ENCODE measurements at regions of chr13 and their contacts with region 1.

Region 1: DNA sequence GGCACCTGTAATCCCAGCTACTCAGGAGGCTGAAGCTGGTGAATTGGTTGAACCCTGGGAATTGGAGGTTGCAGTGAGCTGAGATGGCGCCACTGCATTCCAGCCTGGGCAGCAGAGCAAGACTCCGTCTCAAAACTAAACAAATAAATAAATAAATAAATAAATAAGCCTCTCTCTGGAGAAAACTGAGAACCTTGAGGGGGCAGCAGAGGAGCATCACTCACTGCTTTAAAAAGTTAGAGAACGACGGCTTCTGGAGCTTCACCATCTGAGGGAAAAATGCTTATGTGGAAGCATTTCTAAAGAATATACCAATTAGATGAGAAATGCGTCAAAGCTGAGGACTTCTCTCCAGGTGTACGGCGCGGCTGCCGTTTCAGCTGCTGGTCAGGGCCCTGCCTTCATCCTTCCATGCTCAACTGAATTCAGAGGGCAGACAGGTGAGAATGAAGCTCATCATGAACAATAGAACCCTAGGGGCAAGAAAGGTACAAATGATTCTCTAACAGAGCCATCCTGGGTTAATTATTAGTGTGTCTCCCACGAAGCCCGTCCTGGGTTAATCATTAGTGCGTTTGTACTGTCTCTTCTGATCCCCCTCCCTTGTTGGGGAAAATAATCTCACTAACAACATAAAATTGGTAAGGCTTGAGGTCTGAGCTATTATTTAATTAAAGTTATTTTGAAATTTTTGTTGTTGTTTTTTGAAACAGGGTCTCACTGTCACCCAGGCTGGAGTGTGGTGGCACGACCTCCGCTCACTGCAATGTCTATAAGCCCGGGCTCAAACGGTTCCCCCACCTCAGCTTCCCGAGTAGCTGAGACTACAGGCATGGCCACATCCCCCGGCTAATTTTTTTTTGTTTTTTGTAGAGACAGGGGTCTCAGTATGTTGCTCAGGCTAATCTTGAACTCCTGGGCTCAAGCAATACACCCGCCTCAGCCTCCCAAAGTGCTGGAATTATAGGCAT is 80.1 kb downstream of the IPO5 start:
- DNase-seq: peak; percentile 43
- ATAC-seq: peak; percentile 64
- H3K4me3 ChIP-seq: no peak overlapping the region
- H3K27ac ChIP-seq: no peak overlapping the region
- H3K4me1 ChIP-seq: no peaks in the 10 kb centered on the region
- H3K27me3 ChIP-seq: no peaks in the 10 kb centered on the region
- CTCF ChIP-seq: peak; percentile 30; the same call in 1 of the 2 replicates

Region 2: GRCh38 chr13:98397221-98397620 is 363.7 kb after region 1 on chr13:
- CTCF ChIA-PET with region 1: no interaction called
- POLR2A ChIA-PET with region 1: no interaction called
- intact Hi-C with region 1: loop called (anchors 5 kb)
- DNase-seq: no peak
- ATAC-seq: peak; percentile 33; the same call in 1 of the 2 replicates
- H3K4me3 ChIP-seq: no peak overlapping the region
- H3K27ac ChIP-seq: no peak overlapping the region
- H3K4me1 ChIP-seq: no peaks in the 10 kb centered on the region
- H3K27me3 ChIP-seq: no peaks in the 10 kb centered on the region
- CTCF ChIP-seq: 0 out of 2 replicates have a peak, but pooled peaks have one; percentile 21

Region 3: GRCh38 chr13:98429977-98430736 is 396.6 kb after region 1 on chr13:
- CTCF ChIA-PET with region 1: no interaction called
- POLR2A ChIA-PET with region 1: no interaction called
- intact Hi-C with region 1: loop called (anchors 1 kb)
- DNase-seq: no peak
- ATAC-seq: no peak
- H3K4me3 ChIP-seq: no peak overlapping the region
- H3K27ac ChIP-seq: no peak overlapping the region
- H3K4me1 ChIP-seq: no peaks in the 10 kb centered on the region
- H3K27me3 ChIP-seq: no peaks in the 10 kb centered on the region
- CTCF ChIP-seq: no peak

Measured in PC-3 (cell line).